GM10248 (cell line): ENCODE measurements at regions of chr20 and their contacts with region 1.

Region 1: DNA sequence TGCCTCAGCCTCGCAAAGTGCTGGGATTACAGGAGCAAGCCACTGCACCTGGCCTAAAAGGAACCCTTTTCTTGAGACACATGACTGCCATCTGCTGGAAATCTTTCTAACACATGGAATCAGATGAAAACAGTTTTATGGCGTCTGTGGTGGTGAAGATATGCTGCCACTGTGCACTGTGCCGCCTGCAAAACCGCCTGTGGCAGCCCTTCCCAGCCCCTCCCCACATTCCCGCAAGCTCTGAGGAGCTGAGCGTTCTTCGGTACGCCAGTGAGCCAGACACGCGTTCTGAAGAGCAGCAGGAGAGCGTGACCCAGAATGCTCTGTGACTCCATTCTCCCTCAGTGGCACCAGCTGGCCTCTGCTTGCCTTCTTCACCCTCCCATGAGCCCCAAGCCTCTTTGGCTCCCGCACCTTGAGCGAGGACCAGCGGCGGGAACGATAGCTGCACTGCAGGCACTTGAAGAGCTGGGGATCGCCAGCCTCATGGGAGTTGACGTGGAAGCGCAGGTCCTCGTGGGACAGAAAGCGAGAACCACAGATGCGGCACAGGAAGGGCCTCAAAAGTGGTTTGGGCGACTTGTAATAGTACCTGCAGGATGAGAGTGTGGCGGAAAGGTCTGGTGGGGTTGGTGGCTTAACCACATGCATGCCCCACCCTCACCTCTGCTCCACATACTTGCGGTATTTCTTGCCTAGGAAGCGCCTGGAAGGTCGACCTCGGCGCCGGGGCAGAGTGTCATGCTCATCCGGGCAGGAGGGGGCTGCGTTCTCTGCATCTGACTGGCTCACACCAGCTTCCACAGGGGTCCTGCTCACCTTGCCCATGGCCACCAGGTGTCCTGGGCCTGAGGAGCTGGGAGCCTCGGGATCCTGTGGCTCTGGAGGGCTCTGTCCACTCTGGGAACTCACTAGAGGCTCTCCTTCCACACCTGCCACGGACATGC is 8.7 kb downstream of the ZNF335 start:
- DNase-seq: no peak
- CTCF ChIP-seq: peak; percentile 41

Region 2: DNA sequence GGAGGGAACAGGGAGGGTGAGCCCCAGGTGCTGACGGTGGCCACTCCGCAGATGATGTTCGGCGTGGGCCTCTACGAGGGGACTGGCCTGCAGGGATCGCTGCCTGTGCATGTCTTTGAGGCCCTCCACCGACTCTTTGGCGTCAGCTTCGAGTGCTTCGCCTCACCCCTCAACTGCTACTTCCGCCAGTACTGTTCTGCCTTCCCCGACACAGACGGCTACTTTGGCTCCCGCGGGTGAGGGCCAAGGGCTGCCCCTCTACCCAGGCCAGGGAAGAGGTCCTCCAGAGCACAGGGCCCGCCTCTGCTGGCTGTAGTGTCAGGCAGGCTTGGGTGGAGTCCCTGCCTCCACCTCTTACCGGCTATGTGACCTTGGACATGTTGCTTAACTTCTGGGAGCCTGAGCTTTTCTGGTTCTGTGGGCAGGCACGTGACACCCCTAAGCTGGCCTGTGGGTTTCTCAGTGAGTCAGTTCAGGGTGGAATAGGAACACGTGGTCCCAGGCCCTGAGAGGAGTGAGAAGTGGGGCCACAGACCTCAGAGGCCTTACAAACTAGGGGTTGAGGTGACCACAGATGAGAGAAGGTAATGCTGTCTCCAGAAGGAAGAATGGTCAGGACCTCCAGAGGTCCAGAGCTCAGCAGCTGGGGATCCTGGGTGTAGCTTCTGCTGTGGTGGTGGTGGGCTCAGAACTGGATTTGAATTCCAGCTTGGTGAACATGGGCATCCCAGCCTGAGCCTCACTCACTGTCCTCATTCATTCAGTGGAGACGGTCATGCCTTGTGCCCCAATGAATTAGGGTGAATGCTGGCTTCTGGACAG is 17.0 kb before region 1 on chr20:
- CTCF ChIA-PET with region 1: interaction called, 36 read pairs
- POLR2A ChIA-PET with region 1: no interaction called
- DNase-seq: no peak
- CTCF ChIP-seq: no peak

Region 3: GRCh38 chr20:45993197-45993951 is 30.0 kb after region 1 on chr20:
- CTCF ChIA-PET with region 1: no interaction called
- POLR2A ChIA-PET with region 1: no interaction called
- DNase-seq: no peak
- CTCF ChIP-seq: no peak

Region 4: DNA sequence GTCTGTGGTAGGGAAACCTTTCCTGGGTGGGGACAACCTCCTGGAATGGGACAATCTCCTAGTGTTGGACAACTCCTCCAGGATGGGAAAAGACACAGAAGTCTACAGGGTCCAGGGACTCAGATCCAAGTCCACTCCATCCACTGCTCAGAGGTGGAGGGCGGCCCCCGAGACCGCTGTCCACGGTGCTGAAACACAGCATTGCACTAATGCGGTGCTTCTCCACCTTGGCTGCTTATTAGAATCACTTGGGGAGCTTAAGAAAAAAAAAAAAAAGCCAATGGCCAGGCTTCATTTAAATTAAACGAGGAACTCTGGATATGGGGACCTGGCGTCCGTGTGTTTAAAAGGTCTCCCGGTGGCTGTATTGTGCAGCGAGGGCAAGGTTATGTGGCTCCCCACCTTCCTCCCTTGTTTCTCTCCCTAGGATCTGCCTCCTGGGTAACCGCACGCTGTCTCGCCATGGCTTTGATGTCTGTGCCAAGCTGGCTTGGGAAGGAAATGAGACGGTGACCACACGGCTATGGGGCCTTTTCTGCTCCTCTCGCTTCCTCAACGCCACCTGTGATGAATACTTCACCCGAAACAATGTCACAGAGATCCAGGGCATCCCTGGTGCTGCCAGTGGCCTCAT is 77.7 kb after region 1 on chr20:
- CTCF ChIA-PET with region 1: no interaction called
- POLR2A ChIA-PET with region 1: no interaction called
- DNase-seq: peak; percentile 57
- CTCF ChIP-seq: no peak